ENCODE measurements at regions of chr18 and their contacts with region 1.

Region 1: GRCh38 chr18:59996370-59996966 is 96.7 kb downstream of the PMAIP1 start:
- DNase-seq: no peak
- ATAC-seq: peak; percentile 85
- H3K4me3 ChIP-seq: no peak overlapping the region
- H3K27ac ChIP-seq: no peak overlapping the region
- H3K4me1 ChIP-seq: no peaks in the 10 kb centered on the region
- H3K27me3 ChIP-seq: no peaks in the 10 kb centered on the region
- CTCF ChIP-seq: peak; percentile 74 to 79 (median 75)
- EP300 ChIP-seq: no peak
- POLR2A ChIP-seq: no peak
- RAD21 ChIP-seq: peak; percentile 70

Region 2: GRCh38 chr18:59783138-59783537 is 213.3 kb before region 1 on chr18:
- CTCF ChIA-PET with region 1: interaction called, 12 read pairs
- POLR2A ChIA-PET with region 1: no interaction called
- RAD21 ChIA-PET with region 1: interaction called, 11 read pairs
- SMC1A ChIA-PET with region 1: interaction called, 11 read pairs
- in situ Hi-C with region 1: no loop called
- intact Hi-C with region 1: loop called (anchors 1 kb)
- DNase-seq: peak; percentile 9
- ATAC-seq: peak; percentile 98
- H3K4me3 ChIP-seq: no peak overlapping the region
- H3K27ac ChIP-seq: no peak overlapping the region
- H3K4me1 ChIP-seq: no peaks in the 10 kb centered on the region
- H3K27me3 ChIP-seq: no peaks in the 10 kb centered on the region
- CTCF ChIP-seq: peak; percentile 63 to 71 (median 71); a peak in 5 of 6 replicates
- EP300 ChIP-seq: no peak
- POLR2A ChIP-seq: no peak
- RAD21 ChIP-seq: peak; percentile 81

Region 3: GRCh38 chr18:59907172-59907571 is 89.3 kb before region 1 on chr18:
- CTCF ChIA-PET with region 1: interaction called, 9 read pairs
- POLR2A ChIA-PET with region 1: no interaction called
- RAD21 ChIA-PET with region 1: interaction called, 29 read pairs
- SMC1A ChIA-PET with region 1: interaction called, 4 read pairs
- in situ Hi-C with region 1: no loop called
- intact Hi-C with region 1: no loop called
- DNase-seq: no peak
- ATAC-seq: peak; percentile 16
- H3K4me3 ChIP-seq: peak overlapping the region; percentile 22; the same call in 1 of the 2 replicates
- H3K27ac ChIP-seq: peak overlapping the region; percentile 95
- H3K4me1 ChIP-seq: peaks cover 43% of the 10 kb centered on the region
- H3K27me3 ChIP-seq: no peaks in the 10 kb centered on the region
- CTCF ChIP-seq: no peak
- EP300 ChIP-seq: peak in 1 of 2 experiments; percentile 36; a peak in 1 of 4 replicates
- POLR2A ChIP-seq: no peak
- RAD21 ChIP-seq: no peak

Region 4: DNA sequence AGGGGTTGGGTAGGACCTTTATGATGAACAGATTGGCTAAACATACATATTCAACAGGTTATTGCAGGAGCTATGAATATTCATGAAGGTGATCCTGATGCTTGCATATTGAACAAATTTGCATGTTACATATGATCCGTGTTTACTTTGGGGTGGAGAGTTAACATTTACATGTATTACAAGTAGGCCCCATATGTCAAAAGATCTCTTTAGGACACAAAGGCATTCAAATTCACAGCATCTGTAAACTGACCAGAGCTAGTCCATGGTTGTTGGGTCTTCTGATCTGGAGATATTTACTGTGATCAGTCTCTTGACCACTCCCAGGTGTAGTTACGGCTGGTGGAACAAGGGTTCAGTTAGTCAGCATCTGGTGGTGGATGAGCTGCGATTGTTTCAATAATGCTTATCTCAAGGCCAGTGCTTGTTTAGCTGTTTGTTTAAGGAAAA is 16.3 kb before region 1 on chr18:
- CTCF ChIA-PET with region 1: interaction called, 50 read pairs
- POLR2A ChIA-PET with region 1: no interaction called
- RAD21 ChIA-PET with region 1: interaction called, 3 read pairs
- SMC1A ChIA-PET with region 1: interaction called, 6 read pairs
- in situ Hi-C with region 1: no loop called
- intact Hi-C with region 1: no loop called
- DNase-seq: no peak
- ATAC-seq: no peak
- H3K4me3 ChIP-seq: no peak overlapping the region
- H3K27ac ChIP-seq: no peak overlapping the region
- H3K4me1 ChIP-seq: no peaks in the 10 kb centered on the region
- H3K27me3 ChIP-seq: no peaks in the 10 kb centered on the region
- CTCF ChIP-seq: no peak
- EP300 ChIP-seq: no peak
- POLR2A ChIP-seq: no peak
- RAD21 ChIP-seq: no peak

Region 5: DNA sequence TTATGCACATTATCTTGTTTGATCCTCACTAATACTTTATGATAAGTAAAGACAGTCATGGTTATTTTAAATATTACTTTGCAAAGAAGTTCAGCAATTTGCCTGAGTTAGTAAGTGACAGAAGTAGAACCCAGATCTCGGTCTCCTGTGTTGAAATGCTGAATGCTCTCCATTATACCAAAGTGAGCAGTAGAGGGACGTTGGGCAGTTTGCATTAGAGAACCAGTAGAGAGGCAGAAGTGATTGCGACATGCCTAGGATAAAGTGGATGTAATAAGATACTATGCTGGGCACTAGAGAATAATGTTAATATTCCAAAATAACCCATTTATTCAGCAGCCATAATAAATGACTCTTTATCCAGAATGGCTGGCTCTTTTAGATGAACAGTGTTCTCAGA is 104.3 kb after region 1 on chr18:
- CTCF ChIA-PET with region 1: no interaction called
- POLR2A ChIA-PET with region 1: no interaction called
- RAD21 ChIA-PET with region 1: no interaction called
- SMC1A ChIA-PET with region 1: no interaction called
- in situ Hi-C with region 1: no loop called
- intact Hi-C with region 1: no loop called
- DNase-seq: no peak
- ATAC-seq: no peak
- H3K4me3 ChIP-seq: no peak overlapping the region
- H3K27ac ChIP-seq: no peak overlapping the region
- H3K4me1 ChIP-seq: no peaks in the 10 kb centered on the region
- H3K27me3 ChIP-seq: no peaks in the 10 kb centered on the region
- CTCF ChIP-seq: no peak
- EP300 ChIP-seq: no peak
- POLR2A ChIP-seq: no peak
- RAD21 ChIP-seq: no peak

Region 6: GRCh38 chr18:60413944-60414547 is 417.6 kb after region 1 on chr18:
- CTCF ChIA-PET with region 1: interaction called, 25 read pairs
- POLR2A ChIA-PET with region 1: no interaction called
- RAD21 ChIA-PET with region 1: interaction called, 7 read pairs
- SMC1A ChIA-PET with region 1: interaction called, 5 read pairs
- in situ Hi-C with region 1: loop called (anchors 5 kb)
- intact Hi-C with region 1: no loop called
- DNase-seq: no peak
- ATAC-seq: peak; percentile 74
- H3K4me3 ChIP-seq: no peak overlapping the region
- H3K27ac ChIP-seq: no peak overlapping the region
- H3K4me1 ChIP-seq: no peaks in the 10 kb centered on the region
- H3K27me3 ChIP-seq: no peaks in the 10 kb centered on the region
- CTCF ChIP-seq: peak; percentile 40 to 57 (median 50)
- EP300 ChIP-seq: no peak
- POLR2A ChIP-seq: no peak
- RAD21 ChIP-seq: peak; percentile 46

Region 7: GRCh38 chr18:60554967-60555366 is 558.5 kb after region 1 on chr18:
- CTCF ChIA-PET with region 1: interaction called, 63 read pairs
- POLR2A ChIA-PET with region 1: no interaction called
- RAD21 ChIA-PET with region 1: interaction called, 31 read pairs
- SMC1A ChIA-PET with region 1: interaction called, 46 read pairs
- in situ Hi-C with region 1: loop called (anchors 5 kb)
- intact Hi-C with region 1: no loop called
- DNase-seq: no peak
- ATAC-seq: no peak; the same call in 2 of the 3 replicates
- H3K4me3 ChIP-seq: no peak overlapping the region
- H3K27ac ChIP-seq: no peak overlapping the region
- H3K4me1 ChIP-seq: no peaks in the 10 kb centered on the region
- H3K27me3 ChIP-seq: no peaks in the 10 kb centered on the region
- CTCF ChIP-seq: no peak
- EP300 ChIP-seq: no peak
- POLR2A ChIP-seq: no peak
- RAD21 ChIP-seq: no peak